CD8-positive, alpha-beta T cell (primary cell): ENCODE measurements at regions of chr11 and their contacts with region 1.

Region 1: DNA sequence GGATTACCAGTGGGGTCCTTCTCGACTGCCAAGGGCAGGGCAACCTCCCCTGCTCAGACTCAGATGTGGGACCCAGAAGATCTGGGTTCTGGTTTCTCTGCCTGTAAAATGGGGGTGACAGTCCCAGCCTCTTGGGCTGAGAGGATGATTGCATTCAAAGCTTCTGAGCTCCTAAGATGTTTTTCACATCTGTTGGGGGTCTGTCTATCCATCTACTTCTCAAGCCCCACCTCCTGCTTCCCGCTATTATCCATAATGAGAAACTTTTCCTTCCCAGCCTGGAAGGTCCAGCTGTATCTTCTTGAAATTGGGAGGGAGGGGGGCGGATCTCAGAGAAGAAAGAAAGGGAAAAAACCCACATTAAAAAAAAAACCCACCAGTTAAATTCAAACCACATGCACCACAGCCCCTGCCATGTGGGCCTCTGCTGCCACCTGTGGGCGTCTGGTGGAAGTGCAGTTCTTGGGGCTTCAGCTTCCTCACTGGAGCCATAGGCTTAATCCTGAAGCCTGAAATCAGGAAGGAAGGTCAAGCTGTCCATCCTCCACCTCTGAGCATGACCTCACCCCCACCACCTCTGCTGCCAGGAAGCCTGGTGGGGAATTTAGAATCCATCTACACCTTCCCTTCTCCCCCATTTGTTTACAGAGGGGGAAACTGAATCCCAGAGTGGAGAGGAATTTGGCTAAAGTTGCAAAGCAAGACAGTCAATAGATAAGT is 27.3 kb downstream of the ARHGEF17 start:
- DNase-seq: peak; percentile 61 to 86 (median 79)
- ATAC-seq: peak; percentile 95
- H3K4me3 ChIP-seq: no peak overlapping the region
- H3K4me3 Mint-ChIP-seq: no peak overlapping the region
- H3K27ac ChIP-seq: no peak overlapping the region
- H3K27ac Mint-ChIP-seq: no peak overlapping the region
- H3K4me1 ChIP-seq: no peaks in the 10 kb centered on the region
- H3K4me1 Mint-ChIP-seq: no peaks in the 10 kb centered on the region
- H3K27me3 ChIP-seq: no peaks in the 10 kb centered on the region
- H3K27me3 Mint-ChIP-seq: peaks cover 5% of the 10 kb centered on the region
- CTCF ChIP-seq: peak; percentile 97

Region 2: DNA sequence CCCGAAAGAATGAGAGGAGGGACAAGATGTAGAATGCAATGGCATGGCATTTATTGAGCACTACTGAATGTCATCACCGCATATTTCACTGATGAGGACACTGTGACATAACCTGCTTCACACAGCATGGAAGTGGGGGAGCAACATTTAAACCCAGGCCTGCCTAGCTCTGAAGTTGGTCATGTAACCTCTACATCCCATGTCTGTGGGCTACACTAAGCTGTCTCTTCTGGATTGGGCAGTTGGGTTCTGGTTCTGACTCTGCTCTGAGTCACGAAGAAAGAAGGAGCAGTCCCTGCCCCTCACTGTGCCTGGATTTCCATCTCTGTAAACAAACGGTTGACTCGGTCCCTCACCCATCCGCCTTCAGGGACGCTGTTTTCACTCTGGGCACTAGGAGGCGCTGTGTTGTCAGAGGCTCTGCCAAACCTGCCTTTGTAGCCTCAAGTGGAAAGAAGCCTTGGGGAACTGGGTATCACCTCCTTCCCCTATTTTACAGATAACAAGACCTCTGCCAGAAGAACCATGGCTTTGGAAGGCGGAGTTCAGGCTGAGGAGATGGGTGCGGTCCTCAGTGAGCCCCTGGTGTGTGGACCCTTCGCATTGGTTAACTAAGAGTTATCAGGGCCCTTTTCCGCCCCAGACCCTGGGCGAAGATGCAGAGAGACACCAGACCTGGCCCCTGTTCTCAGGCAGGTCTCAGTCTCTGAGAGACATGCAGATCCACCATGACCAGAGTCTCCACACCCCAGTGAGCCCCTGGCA is 40.0 kb before region 1 on chr11:
- CTCF ChIA-PET with region 1: interaction called, 57 read pairs
- POLR2A ChIA-PET with region 1: no interaction called
- intact Hi-C with region 1: loop called (anchors 1 kb)
- DNase-seq: peak; percentile 46 to 81 (median 71)
- ATAC-seq: peak; percentile 93
- H3K4me3 ChIP-seq: no peak overlapping the region
- H3K4me3 Mint-ChIP-seq: no peak overlapping the region
- H3K27ac ChIP-seq: no peak overlapping the region
- H3K27ac Mint-ChIP-seq: no peak overlapping the region
- H3K4me1 ChIP-seq: no peaks in the 10 kb centered on the region
- H3K4me1 Mint-ChIP-seq: peaks cover 2% of the 10 kb centered on the region
- H3K27me3 ChIP-seq: no peaks in the 10 kb centered on the region
- H3K27me3 Mint-ChIP-seq: peaks cover 14% of the 10 kb centered on the region
- CTCF ChIP-seq: peak; percentile 79

Region 3: DNA sequence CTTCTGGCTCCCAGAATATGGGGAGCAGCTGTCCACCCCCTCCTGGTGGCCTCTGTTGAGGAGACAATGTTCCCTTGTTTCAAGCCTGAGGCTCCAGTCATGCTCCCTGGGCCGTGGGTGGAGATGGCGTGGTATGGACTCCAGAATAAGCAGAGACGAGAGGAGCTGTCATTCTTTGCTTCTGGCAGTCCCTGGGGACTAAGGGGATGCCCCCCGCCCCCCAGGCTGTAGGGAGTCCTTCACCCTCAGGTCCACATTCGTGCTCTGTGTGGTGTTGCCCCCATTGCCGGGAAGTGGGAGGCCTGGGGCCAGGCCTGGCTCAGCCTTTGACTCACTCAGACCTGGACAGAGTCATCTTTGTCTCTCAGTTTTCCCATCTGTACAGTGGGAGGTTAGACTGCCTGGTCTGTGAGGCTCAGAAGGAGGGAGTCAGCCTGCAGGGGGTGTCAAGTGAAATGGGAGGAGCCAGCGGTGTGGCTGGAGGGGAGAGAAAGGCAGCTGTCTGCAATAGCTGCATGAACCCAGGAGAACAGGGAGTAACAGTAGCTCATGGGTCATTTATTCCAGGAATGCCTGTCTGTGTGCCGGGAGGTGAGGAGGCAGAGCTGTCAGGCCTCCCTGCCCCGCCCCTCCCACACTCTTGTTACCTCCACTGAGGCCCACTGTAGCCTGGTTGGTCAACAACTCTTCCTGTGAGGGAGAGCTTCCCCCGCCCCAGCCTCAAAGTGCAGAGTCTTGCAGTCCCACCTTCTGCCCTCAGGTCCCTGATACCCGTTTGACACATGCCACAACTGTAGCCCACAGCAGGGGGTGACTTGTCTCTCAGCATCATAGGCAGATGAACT is 21.0 kb before region 1 on chr11:
- CTCF ChIA-PET with region 1: interaction called, 113 read pairs
- POLR2A ChIA-PET with region 1: interaction called, 3 read pairs
- intact Hi-C with region 1: no loop called
- DNase-seq: no peak
- ATAC-seq: no peak
- H3K4me3 ChIP-seq: no peak overlapping the region
- H3K4me3 Mint-ChIP-seq: no peak overlapping the region
- H3K27ac ChIP-seq: no peak overlapping the region
- H3K27ac Mint-ChIP-seq: no peak overlapping the region
- H3K4me1 ChIP-seq: no peaks in the 10 kb centered on the region
- H3K4me1 Mint-ChIP-seq: peaks cover 2% of the 10 kb centered on the region
- H3K27me3 ChIP-seq: no peaks in the 10 kb centered on the region
- H3K27me3 Mint-ChIP-seq: peaks cover 2% of the 10 kb centered on the region
- CTCF ChIP-seq: no peak

Region 4: GRCh38 chr11:73360336-73361013 is 25.1 kb after region 1 on chr11:
- CTCF ChIA-PET with region 1: interaction called, 10 read pairs
- POLR2A ChIA-PET with region 1: no interaction called
- intact Hi-C with region 1: no loop called
- DNase-seq: peak in 6 of 9 experiments; percentile 10 to 46 (median 38)
- ATAC-seq: peak; percentile 73
- H3K4me3 ChIP-seq: no peak overlapping the region
- H3K4me3 Mint-ChIP-seq: no peak overlapping the region
- H3K27ac ChIP-seq: no peak overlapping the region
- H3K27ac Mint-ChIP-seq: no peak overlapping the region
- H3K4me1 ChIP-seq: peaks cover 2% of the 10 kb centered on the region
- H3K4me1 Mint-ChIP-seq: peaks cover 9% of the 10 kb centered on the region
- H3K27me3 ChIP-seq: no peaks in the 10 kb centered on the region
- H3K27me3 Mint-ChIP-seq: no peaks in the 10 kb centered on the region
- CTCF ChIP-seq: peak; percentile 44

Region 5: DNA sequence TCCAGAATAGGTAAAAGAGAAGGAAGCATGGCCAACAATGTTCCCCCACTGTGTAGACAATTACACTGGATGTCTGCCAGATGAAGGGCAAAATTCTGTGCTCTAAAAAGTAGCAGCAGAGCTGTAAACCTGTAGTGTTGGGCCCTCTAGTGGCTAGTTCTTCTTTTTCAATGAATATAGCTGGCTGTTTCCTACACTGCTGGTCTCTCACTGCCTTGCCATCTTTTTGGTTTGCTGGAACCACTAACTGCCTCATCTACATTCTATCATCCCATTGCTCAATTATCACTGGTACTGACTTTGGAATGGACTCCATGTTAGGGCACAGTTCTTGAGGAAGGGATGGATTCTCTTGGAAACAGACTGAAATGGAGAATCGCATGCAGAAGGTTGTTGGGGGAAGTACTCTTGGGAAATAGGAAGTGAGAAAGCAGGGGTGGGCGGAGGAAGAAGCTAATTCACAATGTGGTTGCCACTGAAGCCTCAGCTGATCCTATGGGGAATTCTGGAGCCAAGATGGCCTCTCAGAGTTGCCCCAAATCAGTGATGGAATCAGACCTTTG is 1114.1 kb after region 1 on chr11:
- CTCF ChIA-PET with region 1: no interaction called
- POLR2A ChIA-PET with region 1: no interaction called
- intact Hi-C with region 1: no loop called
- DNase-seq: peak in 8 of 9 experiments; percentile 3 to 80 (median 40)
- ATAC-seq: peak; percentile 89
- H3K4me3 ChIP-seq: no peak overlapping the region
- H3K4me3 Mint-ChIP-seq: no peak overlapping the region
- H3K27ac ChIP-seq: no peak overlapping the region
- H3K27ac Mint-ChIP-seq: no peak overlapping the region
- H3K4me1 ChIP-seq: no peaks in the 10 kb centered on the region
- H3K4me1 Mint-ChIP-seq: peaks cover 5% of the 10 kb centered on the region
- H3K27me3 ChIP-seq: no peaks in the 10 kb centered on the region
- H3K27me3 Mint-ChIP-seq: peaks cover 14% of the 10 kb centered on the region
- CTCF ChIP-seq: peak; percentile 68